ENCODE measurements at regions of chr22 and their contacts with region 1.

Region 1: GRCh38 chr22:35350539-35351503 is 30.1 kb upstream of the HMOX1 start:
- H3K4me3 ChIP-seq: peak overlapping the region; percentile 46
- H3K27ac ChIP-seq: peak overlapping the region; percentile 10; the same call in 1 of the 2 replicates
- H3K4me1 ChIP-seq: no peaks in the 10 kb centered on the region
- CTCF ChIP-seq: peak; percentile 97

Region 2: DNA sequence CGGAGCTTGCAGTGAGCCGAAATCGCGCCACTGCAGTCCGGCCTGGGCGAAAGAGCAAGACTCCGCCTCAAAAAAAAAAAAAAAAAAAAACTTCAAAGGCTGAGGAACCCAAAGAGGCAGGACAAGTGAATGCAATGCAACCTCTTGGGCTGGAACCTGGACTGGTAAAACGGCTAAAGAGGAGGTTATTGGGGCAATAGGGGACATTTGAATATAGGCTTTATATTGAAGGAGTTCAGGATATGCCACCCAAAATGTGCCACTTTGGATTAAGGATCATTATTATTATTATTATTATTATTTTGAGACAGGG is 21.9 kb after region 1 on chr22:
- CTCF ChIA-PET with region 1: interaction called, 10 read pairs
- POLR2A ChIA-PET with region 1: interaction called, 5 read pairs
- H3K4me3 ChIP-seq: no peak overlapping the region
- H3K27ac ChIP-seq: no peak overlapping the region
- H3K4me1 ChIP-seq: peaks cover 3% of the 10 kb centered on the region; the same call in 1 of the 2 replicates
- CTCF ChIP-seq: no peak

Region 3: GRCh38 chr22:35380547-35381423 is 30.0 kb after region 1 on chr22 and contains the start of gene HMOX1:
- CTCF ChIA-PET with region 1: interaction called, 12 read pairs
- POLR2A ChIA-PET with region 1: interaction called, 5 read pairs
- H3K4me3 ChIP-seq: peak within 1 kb of the TSS; percentile 55
- H3K27ac ChIP-seq: peak within 1 kb of the TSS; percentile 48; the same call in 1 of the 2 replicates
- H3K4me1 ChIP-seq: peaks cover 7% of the 10 kb centered on the region
- CTCF ChIP-seq: peak; percentile 54

Region 4: DNA sequence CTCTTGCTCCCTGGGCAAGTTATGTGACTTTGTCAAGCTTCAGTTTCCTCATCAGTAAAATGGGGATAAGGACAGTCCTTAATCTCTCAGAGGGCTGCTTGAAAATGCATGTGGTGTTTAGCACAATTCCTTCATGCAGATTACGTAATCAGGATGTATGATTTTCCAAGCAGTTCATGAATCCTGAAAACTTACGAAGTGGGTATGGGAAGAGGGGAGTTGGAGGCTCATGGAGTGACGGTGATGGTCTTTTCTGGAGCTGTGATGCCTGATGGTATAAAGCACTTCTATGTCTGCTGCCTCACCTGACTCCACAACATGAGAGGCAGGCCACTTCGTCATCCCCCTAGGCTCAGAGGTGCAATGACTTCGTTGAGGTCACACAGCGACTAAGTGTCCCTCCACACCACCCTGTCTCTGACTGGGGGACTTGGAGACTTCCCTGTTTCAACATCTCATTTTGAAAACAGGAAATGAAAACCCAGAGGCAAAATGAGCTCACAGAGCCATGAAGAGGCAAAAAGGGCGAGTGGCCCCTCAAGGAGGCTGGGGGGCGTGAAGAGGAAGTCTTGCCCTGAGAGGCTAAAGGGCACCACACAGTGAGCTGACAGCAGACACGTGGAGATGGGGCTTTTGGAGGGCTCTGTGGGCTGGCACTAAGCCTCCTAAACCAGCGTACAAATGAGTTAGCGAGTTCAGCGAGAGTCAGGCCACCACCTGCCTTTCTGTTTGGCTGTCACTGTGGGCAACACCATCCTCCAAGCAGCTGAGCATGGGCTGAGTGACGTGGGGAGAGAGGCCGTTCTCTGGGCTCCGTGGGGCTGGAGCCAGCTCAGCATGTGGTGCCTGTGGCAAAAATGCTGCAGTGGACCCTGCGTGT is 59.2 kb after region 1 on chr22:
- CTCF ChIA-PET with region 1: interaction called, 11 read pairs
- POLR2A ChIA-PET with region 1: interaction called, 5 read pairs
- H3K4me3 ChIP-seq: no peak overlapping the region
- H3K27ac ChIP-seq: no peak overlapping the region
- H3K4me1 ChIP-seq: no peaks in the 10 kb centered on the region
- CTCF ChIP-seq: no peak

Region 5: DNA sequence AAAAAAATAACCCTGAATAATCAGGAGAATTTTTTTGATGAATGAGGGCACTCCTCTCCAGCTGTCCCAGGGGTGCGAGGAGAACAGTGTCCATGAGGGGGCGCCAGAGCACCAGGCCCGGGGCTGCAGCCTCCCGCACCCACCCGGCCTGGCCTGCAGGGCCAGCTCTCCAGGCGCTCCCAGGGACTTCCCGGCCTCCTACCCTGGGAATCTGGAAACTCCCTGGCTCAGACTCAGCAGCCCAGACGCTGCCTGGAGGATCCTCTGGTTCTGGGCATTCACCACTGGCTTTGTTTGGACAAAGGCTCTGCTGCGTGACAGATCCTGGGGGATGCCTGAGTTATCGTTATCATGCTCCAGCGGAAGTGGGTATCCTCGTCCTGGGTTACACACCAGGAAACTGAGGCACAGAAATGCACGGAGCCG is 80.1 kb after region 1 on chr22:
- CTCF ChIA-PET with region 1: interaction called, 12 read pairs
- POLR2A ChIA-PET with region 1: no interaction called
- H3K4me3 ChIP-seq: no peak overlapping the region
- H3K27ac ChIP-seq: no peak overlapping the region
- H3K4me1 ChIP-seq: no peaks in the 10 kb centered on the region
- CTCF ChIP-seq: 0 out of 2 replicates have a peak, but pooled peaks have one; percentile 21

Region 6: GRCh38 chr22:35582861-35583670 is 232.2 kb after region 1 on chr22:
- CTCF ChIA-PET with region 1: interaction called, 33 read pairs
- POLR2A ChIA-PET with region 1: no interaction called
- H3K4me3 ChIP-seq: no peak overlapping the region
- H3K27ac ChIP-seq: no peak overlapping the region
- H3K4me1 ChIP-seq: no peaks in the 10 kb centered on the region
- CTCF ChIP-seq: peak; percentile 78

Region 7: DNA sequence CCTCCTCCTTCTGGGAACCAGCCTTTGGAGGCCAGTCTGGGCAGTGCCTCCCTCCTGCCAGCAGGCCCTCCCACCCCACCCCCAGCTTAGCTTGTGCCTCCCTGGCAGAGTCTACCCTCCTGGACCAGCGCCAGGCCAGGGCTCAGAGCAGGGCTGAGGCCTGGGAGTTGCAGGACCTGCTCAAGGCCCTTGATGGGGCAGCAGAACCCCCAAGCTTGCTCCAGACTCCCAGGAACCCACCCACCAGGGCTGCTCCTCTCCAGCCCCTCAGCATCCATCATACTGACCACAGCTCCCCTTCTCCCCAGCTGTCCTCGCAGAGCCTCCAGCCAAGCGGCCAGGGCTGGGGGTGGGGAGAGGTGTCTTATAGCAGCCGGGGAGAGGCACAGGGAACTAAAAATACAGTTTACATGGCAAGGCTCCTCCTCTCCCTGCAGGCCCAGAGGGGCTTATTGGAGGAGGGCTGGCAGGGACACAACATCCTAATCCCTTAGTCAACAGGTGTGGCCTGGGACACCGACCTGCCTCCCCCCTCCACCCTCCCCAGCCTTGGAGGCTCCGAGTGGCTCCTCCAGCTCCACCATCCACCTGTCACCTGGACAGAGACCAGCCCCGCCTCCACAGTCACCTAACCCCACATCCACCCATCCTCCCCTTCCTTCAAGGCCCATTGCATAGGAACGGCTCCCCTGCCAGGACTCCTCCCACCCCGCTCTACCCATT is 271.5 kb after region 1 on chr22:
- CTCF ChIA-PET with region 1: interaction called, 25 read pairs
- POLR2A ChIA-PET with region 1: no interaction called
- H3K4me3 ChIP-seq: no peak overlapping the region
- H3K27ac ChIP-seq: no peak overlapping the region
- H3K4me1 ChIP-seq: no peaks in the 10 kb centered on the region
- CTCF ChIP-seq: no peak

Measured in HEK293 (cell line).